ENCODE measurements at regions of chr11 and their contacts with region 1.

Region 1: GRCh38 chr11:85854557-85855340 is 434 bp upstream of the CCDC83 start:
- DNase-seq: peak; percentile 77
- H3K4me3 ChIP-seq: peak overlapping the region; percentile 71
- H3K27ac ChIP-seq: peak overlapping the region; percentile 70
- H3K27me3 ChIP-seq: no peaks in the 10 kb centered on the region
- CTCF ChIP-seq: peak; percentile 54; the same call in 1 of the 2 replicates

Region 2: GRCh38 chr11:85685820-85686459 is 168.8 kb before region 1 on chr11 and contains the start of gene CCDC89:
- CTCF ChIA-PET with region 1: interaction called, 11 read pairs
- POLR2A ChIA-PET with region 1: interaction called, 7 read pairs
- DNase-seq: peak; percentile 97
- H3K4me3 ChIP-seq: peak within 1 kb of the TSS; percentile 69
- H3K27ac ChIP-seq: peak within 1 kb of the TSS; percentile 80
- H3K27me3 ChIP-seq: no peaks in the 10 kb centered on the region
- CTCF ChIP-seq: no peak
- polyA plus RNA-seq, gene CCDC89: 2.5 and 2.7 TPM in 2 replicates

Region 3: DNA sequence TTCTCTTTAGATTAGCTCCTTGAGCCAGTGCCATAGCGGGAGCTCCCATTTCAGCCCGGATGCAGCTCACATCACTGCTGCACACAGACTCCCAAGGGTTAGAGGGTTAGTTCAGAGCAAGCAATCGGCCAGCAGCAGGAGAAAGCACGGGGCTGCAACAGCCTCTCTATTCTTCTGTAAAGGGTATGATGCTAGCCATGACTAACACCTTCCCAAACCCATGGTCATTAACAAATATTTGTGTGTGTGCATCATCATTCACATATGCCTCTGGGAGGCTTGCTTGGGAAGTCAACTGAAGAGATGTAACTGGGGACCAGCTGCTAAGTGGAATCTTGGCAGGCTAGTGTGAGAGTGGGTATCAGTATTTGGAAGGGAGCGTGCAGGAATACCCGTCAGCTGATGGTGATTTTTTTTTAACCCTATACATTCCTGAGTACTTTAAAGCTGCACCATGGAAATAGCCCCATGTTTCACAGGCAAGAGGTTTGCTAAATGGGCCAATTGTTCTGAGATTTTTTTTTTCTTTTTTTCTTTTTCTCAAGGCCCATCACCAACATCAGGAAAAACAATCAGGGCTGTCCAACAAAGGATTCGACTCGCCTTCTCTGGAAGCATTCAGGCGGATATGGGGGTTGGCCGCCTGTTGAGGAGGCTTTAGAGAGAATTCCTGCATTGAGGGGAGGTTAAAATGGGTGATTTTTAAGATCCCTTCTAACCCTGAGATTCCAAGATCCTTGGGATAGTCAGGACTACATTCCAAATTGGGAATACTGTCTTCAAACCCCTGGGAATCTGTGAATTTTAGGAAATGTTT is 135.6 kb before region 1 on chr11:
- CTCF ChIA-PET with region 1: interaction called, 11 read pairs
- POLR2A ChIA-PET with region 1: no interaction called
- DNase-seq: peak; percentile 97
- H3K4me3 ChIP-seq: peak overlapping the region; percentile 64
- H3K27ac ChIP-seq: peak overlapping the region; percentile 97
- H3K27me3 ChIP-seq: no peaks in the 10 kb centered on the region
- CTCF ChIP-seq: no peak

Region 4: DNA sequence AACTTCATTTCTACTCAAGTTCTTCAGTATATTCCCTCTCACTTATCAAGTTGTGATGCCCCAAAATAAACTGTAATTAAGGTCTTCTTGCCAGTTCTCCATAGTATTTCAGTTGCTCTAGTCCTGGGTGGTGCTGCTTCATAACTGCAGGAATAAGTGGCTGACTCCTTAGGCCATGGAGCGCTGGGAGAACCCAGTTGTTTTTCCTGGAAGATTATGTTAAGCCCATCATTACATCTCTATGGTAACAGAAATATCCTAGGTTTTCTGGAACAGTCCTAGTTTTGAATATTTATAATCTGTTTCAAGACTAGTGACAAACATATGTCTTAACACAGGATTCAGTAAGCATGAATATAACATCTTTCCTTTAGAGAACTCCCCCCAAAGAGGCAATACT is 51.4 kb before region 1 on chr11:
- CTCF ChIA-PET with region 1: no interaction called
- POLR2A ChIA-PET with region 1: no interaction called
- DNase-seq: no peak
- H3K4me3 ChIP-seq: no peak overlapping the region
- H3K27ac ChIP-seq: no peak overlapping the region
- H3K27me3 ChIP-seq: no peaks in the 10 kb centered on the region
- CTCF ChIP-seq: no peak

Region 5: DNA sequence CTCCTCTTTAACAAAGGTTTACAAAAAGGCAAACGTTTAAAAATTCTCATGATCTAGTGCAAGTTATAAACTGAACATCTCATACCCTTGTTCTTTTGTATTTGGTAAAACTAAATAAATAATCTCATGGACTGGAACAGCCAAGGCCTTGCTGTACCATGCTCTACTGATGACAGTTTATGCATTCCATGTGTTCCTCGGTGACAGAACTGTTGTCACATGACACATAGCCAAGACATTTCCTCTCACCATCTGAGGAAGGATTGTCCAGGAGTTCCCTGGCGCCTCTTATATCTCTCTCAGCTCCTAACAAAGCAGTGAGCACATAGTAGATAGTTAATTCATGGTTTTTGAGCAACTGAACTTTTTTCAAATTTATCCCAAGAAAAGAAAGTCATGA is 13.0 kb after region 1 on chr11:
- CTCF ChIA-PET with region 1: interaction called, 68 read pairs
- POLR2A ChIA-PET with region 1: no interaction called
- DNase-seq: no peak
- H3K4me3 ChIP-seq: no peak overlapping the region
- H3K27ac ChIP-seq: no peak overlapping the region
- H3K27me3 ChIP-seq: no peaks in the 10 kb centered on the region
- CTCF ChIP-seq: no peak

Region 6: DNA sequence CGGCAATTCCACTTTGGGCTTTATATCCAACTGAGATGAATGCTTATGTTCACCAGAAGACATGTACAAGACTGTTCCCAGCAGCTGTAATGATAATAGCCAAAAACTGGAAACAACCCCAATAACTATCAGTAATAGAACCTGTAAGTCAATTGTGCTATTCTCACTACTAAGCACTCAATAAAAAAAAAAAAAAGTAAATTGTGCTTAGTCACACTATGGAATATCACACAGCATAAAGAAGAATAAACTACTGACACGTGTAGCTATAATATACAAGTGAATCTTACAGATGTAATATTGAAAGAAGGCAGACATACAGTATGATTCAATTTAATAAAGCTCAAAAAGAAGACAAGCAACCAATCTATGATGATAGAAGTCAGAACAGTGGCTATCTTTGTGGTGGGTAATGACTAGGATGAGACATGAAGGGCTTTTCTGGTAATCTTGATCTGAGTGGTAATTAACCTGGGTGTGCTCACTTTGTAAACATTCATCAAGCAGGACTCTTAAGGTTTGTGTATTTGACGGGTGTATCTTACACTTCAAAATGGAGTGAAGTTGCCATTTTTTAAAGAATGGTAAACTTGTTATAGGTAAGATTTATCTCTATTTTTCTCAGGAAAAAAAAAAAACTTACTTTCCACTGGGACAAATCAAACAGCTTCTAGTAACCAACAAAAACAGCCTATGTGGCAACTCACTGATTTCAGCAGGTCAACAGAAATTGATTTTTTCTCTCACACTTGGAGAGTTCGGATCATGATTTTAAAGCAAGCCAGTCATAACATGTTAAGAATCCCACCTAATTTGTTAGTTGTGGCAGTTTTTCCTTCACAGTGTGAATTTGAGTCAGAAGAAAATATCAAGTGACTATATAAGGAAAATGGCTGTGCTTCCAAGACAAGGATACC is 84.6 kb after region 1 on chr11:
- CTCF ChIA-PET with region 1: interaction called, 11 read pairs
- POLR2A ChIA-PET with region 1: interaction called, 3 read pairs
- DNase-seq: no peak
- H3K4me3 ChIP-seq: no peak overlapping the region
- H3K27ac ChIP-seq: no peak overlapping the region
- H3K27me3 ChIP-seq: no peaks in the 10 kb centered on the region
- CTCF ChIP-seq: no peak

Region 7: DNA sequence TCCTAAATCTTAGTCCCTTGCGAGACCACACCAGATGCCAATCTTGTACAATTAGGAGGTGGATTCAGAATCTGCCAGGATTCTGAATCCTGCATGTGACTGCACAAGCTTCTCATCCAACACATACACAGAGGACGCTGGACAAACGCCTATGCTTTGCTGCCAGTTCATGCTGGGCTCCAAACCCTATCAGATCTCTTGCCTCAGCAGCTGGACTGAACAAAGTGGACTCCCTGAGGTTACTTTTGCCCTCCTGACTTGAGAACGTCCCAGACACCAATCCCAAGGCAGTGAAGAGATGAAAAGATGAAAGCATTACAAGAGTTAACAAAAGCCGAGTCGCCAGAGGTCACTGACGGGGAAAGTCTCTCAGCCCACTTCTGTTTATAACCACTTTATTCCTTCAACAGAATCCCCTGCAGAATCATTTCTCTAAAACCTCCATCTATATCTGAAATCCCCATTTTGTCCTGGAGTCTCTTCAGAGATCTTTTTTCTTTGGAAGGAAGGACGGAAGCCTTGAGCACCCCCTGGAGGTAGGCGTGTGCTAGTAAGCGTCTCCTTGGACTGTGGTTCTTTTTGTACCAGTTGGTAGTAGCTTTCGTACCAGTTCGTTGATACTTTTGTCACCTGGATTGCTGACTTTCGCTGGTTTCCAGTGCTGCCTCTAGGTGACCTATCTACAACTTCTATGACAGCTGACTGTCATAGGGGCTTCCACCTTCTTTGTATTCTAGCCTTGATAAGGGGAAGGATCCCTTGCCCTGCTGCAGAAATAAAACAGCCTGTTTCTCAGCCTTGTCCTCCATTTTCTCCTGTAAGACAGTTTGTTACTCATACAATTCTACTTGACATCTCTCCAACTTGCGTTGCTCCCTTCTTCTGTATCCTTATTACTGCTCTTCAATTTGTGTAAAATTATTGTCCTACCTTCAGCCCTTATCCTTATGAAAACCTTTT is 363.7 kb after region 1 on chr11:
- CTCF ChIA-PET with region 1: interaction called, 17 read pairs
- POLR2A ChIA-PET with region 1: no interaction called
- DNase-seq: peak; percentile 41
- H3K4me3 ChIP-seq: peak overlapping the region; percentile 29
- H3K27ac ChIP-seq: no peak overlapping the region
- H3K27me3 ChIP-seq: no peaks in the 10 kb centered on the region
- CTCF ChIP-seq: peak; percentile 97